Activated naive CD4-positive, alpha-beta T cell treated with anti-CD3 and anti-CD28 coated beads, Interleukin-2, amount 10 ng/mL, durations not matched to agents 7 days and 5 days (primary cell): ENCODE measurements at regions of chr14 and their contacts with region 1.

Region 1: GRCh38 chr14:30980980-30981379 is 44.5 kb upstream of the AP4S1 start:
- DNase-seq: no peak
- H3K4me3 Mint-ChIP-seq: no peak overlapping the region
- H3K27ac Mint-ChIP-seq: no peak overlapping the region
- H3K4me1 Mint-ChIP-seq: no peaks in the 10 kb centered on the region
- H3K27me3 Mint-ChIP-seq: no peaks in the 10 kb centered on the region

Region 2: DNA sequence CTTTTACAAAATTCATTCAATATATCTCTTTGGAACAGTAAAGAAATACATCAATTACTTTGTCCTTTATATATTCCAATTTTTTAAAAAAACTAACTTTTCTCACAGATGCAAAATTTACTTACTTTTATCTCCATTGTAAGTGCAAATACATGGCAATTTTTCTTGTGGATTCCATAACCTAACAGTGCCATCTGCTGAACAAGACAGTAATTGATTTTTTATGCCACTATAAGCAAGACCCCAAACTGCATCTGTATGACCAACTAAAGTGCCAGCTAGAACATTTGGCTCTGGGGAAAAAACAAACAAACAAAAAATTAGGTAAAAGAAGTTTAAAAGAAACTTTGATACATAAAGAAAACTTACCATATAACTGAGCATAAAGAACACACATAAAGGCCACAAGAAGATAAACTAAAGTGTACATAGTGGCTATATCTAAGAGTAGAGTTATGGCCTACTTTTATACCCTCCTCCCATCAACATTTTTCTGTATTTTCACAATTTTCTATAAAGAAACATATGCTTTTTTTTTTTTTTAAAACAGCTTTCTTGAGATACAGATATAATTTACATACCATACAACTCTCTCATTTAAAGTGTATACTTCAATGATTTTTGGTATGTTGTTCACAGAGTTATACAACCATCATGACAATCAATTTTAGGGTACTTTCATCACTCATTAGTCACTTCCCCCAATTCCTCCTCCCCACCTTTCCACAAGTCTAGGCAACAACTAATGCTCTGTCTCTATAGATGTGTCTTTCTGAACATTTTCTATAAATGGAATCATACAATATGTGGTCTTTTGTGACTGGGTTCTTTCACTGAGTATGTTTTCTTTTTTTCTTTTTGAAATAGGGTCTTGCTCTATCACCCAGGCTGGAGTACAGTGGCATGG is 74.0 kb before region 1 on chr14:
- CTCF ChIA-PET with region 1: no interaction called
- DNase-seq: no peak
- H3K4me3 Mint-ChIP-seq: no peak overlapping the region
- H3K27ac Mint-ChIP-seq: no peak overlapping the region
- H3K4me1 Mint-ChIP-seq: no peaks in the 10 kb centered on the region
- H3K27me3 Mint-ChIP-seq: no peaks in the 10 kb centered on the region

Region 3: DNA sequence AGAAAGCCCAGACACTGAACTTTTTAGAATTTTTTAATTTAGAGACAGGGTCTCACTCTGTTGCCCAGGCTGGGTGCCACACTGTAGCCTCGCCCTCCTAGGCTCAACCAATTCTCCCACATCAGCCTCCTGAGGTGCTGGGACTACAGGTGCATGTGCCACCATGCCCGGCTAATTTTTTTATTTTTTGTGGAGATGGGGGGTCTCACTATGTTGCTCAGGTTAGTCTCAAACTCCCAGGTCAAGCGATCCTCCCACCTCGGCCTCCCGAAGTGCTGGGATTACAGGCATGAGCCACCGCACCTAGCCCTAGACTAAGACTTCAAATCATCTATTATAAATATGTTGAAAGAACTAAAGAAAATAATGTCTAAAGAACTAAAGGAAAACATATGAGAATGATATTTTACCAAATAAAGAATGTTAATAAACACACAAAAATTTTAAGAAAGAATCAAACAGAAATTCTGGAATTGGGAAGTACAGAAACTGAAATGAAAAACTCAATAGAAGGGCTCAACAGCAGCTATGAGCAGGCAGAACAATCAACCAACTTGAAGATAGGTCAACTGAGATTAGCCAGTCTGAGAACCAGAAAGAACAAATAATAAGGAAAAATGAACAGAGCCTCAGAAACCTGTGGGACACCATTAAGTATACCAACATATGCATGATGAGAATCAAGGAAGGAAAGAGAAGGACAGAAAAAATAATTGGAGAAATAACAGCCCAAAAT is 18.2 kb after region 1 on chr14:
- CTCF ChIA-PET with region 1: no interaction called
- DNase-seq: no peak
- H3K4me3 Mint-ChIP-seq: no peak overlapping the region
- H3K27ac Mint-ChIP-seq: no peak overlapping the region
- H3K4me1 Mint-ChIP-seq: peaks cover 21% of the 10 kb centered on the region
- H3K27me3 Mint-ChIP-seq: no peaks in the 10 kb centered on the region

Region 4: GRCh38 chr14:31084385-31084784 is 103.4 kb after region 1 on chr14:
- CTCF ChIA-PET with region 1: interaction called, 13 read pairs
- DNase-seq: no peak
- H3K4me3 Mint-ChIP-seq: no peak overlapping the region
- H3K27ac Mint-ChIP-seq: no peak overlapping the region
- H3K4me1 Mint-ChIP-seq: no peaks in the 10 kb centered on the region
- H3K27me3 Mint-ChIP-seq: no peaks in the 10 kb centered on the region